CD4-positive, alpha-beta T cell (primary cell): ENCODE measurements at regions of chr12 and their contacts with region 1.

Region 1: GRCh38 chr12:3299929-3300832 is 190.8 kb upstream of the PRMT8 start:
- DNase-seq: peak; percentile 64 to 88 (median 75)
- ATAC-seq: peak; percentile 86
- H3K4me3 ChIP-seq: peak overlapping the region; percentile 24
- H3K4me3 Mint-ChIP-seq: peak overlapping the region; percentile 42
- H3K27ac ChIP-seq: no peak overlapping the region
- H3K27ac Mint-ChIP-seq: peak overlapping the region; percentile 61
- H3K4me1 ChIP-seq: peaks cover 12% of the 10 kb centered on the region
- H3K4me1 Mint-ChIP-seq: peaks cover 12% of the 10 kb centered on the region
- H3K27me3 ChIP-seq: peaks cover 0 to 6% of the 10 kb centered on the region in 2 experiments
- H3K27me3 Mint-ChIP-seq: peaks cover 14% of the 10 kb centered on the region
- CTCF ChIP-seq: peak; percentile 93

Region 2: DNA sequence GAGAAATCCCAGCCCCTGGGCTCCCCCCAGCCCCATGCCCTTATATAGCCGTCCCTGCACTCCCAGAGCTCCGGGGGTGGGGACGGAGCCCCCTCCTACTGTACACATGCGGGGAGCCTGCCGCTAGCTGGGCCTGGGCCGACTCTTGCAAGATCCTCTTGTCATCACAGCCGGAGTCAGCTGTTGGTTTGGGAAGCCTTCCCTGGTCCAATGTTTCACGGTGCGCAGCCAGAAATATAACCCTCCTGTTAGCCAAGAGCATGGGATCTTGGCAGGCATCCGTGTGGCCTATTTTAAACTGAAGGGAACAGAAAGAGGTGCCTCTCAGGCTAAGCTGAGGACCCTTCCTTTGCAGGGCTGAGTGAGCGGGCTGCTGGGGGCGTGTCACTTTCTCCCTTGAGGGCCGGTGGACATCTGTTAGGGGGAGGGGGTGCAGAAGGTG is 47.7 kb before region 1 on chr12:
- CTCF ChIA-PET with region 1: no interaction called
- POLR2A ChIA-PET with region 1: no interaction called
- intact Hi-C with region 1: no loop called
- DNase-seq: no peak
- ATAC-seq: no peak
- H3K4me3 ChIP-seq: no peak overlapping the region
- H3K4me3 Mint-ChIP-seq: no peak overlapping the region
- H3K27ac ChIP-seq: no peak overlapping the region
- H3K27ac Mint-ChIP-seq: no peak overlapping the region
- H3K4me1 ChIP-seq: peaks cover 8% of the 10 kb centered on the region
- H3K4me1 Mint-ChIP-seq: peaks cover 6% of the 10 kb centered on the region
- H3K27me3 ChIP-seq: no peaks in the 10 kb centered on the region
- H3K27me3 Mint-ChIP-seq: no peaks in the 10 kb centered on the region
- CTCF ChIP-seq: no peak

Region 3: GRCh38 chr12:3288690-3289089 is 11.5 kb before region 1 on chr12:
- CTCF ChIA-PET with region 1: interaction called, 12 read pairs
- POLR2A ChIA-PET with region 1: no interaction called
- intact Hi-C with region 1: no loop called
- DNase-seq: no peak
- ATAC-seq: no peak
- H3K4me3 ChIP-seq: no peak overlapping the region
- H3K4me3 Mint-ChIP-seq: no peak overlapping the region
- H3K27ac ChIP-seq: no peak overlapping the region
- H3K27ac Mint-ChIP-seq: no peak overlapping the region
- H3K4me1 ChIP-seq: no peaks in the 10 kb centered on the region
- H3K4me1 Mint-ChIP-seq: no peaks in the 10 kb centered on the region
- H3K27me3 ChIP-seq: no peaks in the 10 kb centered on the region
- H3K27me3 Mint-ChIP-seq: peaks cover 6% of the 10 kb centered on the region
- CTCF ChIP-seq: no peak

Region 4: DNA sequence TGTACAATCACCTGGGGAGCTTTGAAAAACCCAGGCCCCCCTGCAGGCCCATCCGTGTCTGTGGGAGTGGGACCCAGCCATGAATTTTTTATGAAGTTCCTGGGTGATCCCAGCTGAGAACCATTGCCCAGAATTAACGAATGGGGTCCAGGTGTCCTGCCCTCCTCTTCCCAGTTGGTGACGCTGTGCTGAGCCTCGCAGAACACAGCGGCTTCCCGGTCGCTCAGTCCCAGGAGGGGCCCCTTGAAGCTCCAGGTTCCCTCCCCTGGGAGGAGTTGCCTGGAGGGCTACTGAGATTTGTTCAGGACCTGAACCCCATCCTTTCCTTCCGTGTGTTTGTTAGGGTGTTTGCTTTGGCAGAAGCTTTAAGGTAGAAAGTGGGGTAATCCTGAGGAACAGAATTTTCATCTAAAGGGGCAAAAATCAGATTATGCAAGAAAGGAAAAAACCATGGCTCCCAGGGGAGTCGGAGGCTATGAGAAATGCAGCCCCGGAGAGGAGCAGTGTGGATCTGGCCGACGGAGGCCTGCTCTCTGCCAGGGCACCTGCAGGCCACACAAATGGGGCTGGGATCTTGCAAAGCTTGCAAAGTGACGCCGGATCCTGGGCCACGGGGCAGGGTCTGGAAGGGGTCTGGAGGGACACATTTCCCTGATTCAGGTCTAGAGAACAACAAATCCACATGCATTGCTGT is 26.1 kb after region 1 on chr12:
- CTCF ChIA-PET with region 1: no interaction called
- POLR2A ChIA-PET with region 1: no interaction called
- intact Hi-C with region 1: no loop called
- DNase-seq: no peak
- ATAC-seq: no peak
- H3K4me3 ChIP-seq: no peak overlapping the region
- H3K4me3 Mint-ChIP-seq: no peak overlapping the region
- H3K27ac ChIP-seq: no peak overlapping the region
- H3K27ac Mint-ChIP-seq: no peak overlapping the region
- H3K4me1 ChIP-seq: no peaks in the 10 kb centered on the region
- H3K4me1 Mint-ChIP-seq: no peaks in the 10 kb centered on the region
- H3K27me3 ChIP-seq: peaks cover 0 to 4% of the 10 kb centered on the region in 2 experiments
- H3K27me3 Mint-ChIP-seq: peaks cover 3% of the 10 kb centered on the region
- CTCF ChIP-seq: no peak

Region 5: DNA sequence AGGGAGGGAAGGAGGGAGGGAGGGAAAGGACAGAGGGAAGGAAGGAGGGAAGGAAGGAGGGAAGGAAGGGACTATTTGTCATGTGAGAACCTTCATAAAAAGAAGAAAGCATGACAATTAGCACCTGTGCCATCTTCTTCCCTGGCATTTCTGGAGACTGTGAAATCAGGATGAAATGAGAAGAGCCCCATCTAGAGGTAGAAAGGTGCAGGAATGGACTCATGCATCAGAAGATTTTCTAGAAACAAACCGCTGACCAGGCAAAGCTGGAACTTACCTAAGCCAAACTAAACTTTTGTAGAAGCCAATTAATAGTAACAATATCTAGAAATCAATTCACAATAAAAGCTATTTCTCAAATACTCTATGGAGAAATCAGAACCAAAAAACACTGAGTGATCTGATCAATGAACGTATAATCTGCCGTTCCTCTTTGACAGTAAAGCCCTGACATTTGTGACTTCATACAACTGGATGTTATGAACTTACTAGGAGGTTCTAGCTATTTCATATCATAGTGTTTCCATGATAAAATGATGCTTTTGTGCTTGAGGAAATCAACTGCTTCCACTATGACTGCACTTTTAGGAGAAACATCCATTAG is 477.1 kb after region 1 on chr12:
- CTCF ChIA-PET with region 1: interaction called, 6 read pairs
- POLR2A ChIA-PET with region 1: no interaction called
- intact Hi-C with region 1: loop called (anchors 1 kb)
- DNase-seq: peak in 4 of 14 experiments; percentile 12 to 67 (median 58)
- ATAC-seq: peak; percentile 63
- H3K4me3 ChIP-seq: no peak overlapping the region
- H3K4me3 Mint-ChIP-seq: no peak overlapping the region
- H3K27ac ChIP-seq: no peak overlapping the region
- H3K27ac Mint-ChIP-seq: no peak overlapping the region
- H3K4me1 ChIP-seq: peaks cover 2% of the 10 kb centered on the region
- H3K4me1 Mint-ChIP-seq: peaks cover 5% of the 10 kb centered on the region
- H3K27me3 ChIP-seq: no peaks in the 10 kb centered on the region
- H3K27me3 Mint-ChIP-seq: no peaks in the 10 kb centered on the region
- CTCF ChIP-seq: peak; percentile 75

Region 6: DNA sequence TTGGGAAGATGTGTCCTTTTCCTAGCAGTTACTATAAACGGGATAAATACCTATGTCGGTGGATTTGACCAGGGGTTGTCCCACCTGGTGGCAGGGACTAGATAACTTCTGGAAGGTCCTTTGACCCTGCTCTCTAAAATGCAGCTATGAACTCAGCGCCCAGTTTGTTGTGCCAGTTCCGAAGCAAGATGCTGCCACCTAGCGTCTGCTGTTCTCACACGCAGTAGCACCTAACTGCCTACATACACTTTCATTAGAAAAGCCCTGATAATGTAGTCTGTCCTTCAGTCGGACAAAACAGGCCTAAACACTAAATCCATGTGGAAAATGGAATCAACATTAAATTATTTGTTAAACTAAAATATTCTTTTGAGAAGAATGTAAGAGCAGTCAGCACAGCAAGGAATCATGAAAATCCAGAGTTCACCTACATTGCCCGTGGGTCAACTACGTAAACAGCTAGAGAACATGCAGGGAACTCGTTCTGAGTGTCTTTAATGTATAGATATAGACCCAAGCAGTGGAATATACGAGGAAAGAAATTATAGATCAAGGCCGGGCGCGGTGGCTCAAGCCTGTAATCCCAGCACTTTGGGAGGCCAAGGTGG is 503.8 kb after region 1 on chr12:
- CTCF ChIA-PET with region 1: interaction called, 47 read pairs
- POLR2A ChIA-PET with region 1: interaction called, 3 read pairs
- intact Hi-C with region 1: loop called (anchors 1 kb)
- DNase-seq: peak; percentile 54 to 84 (median 64)
- ATAC-seq: peak; percentile 71
- H3K4me3 ChIP-seq: no peak overlapping the region
- H3K4me3 Mint-ChIP-seq: no peak overlapping the region
- H3K27ac ChIP-seq: no peak overlapping the region
- H3K27ac Mint-ChIP-seq: peak overlapping the region; percentile 67
- H3K4me1 ChIP-seq: no peaks in the 10 kb centered on the region
- H3K4me1 Mint-ChIP-seq: no peaks in the 10 kb centered on the region
- H3K27me3 ChIP-seq: no peaks in the 10 kb centered on the region
- H3K27me3 Mint-ChIP-seq: no peaks in the 10 kb centered on the region
- CTCF ChIP-seq: peak; percentile 92